ENCODE measurements at regions of chr5 and their contacts with region 1.

Region 1: GRCh38 chr5:170225326-170226128 is 7.3 kb upstream of the C5orf58 start:
- DNase-seq: peak; percentile 65 to 73 (median 69)
- H3K4me3 ChIP-seq: no peak overlapping the region
- H3K4me3 Mint-ChIP-seq: peak overlapping the region in 1 of 8 donors; percentile 14
- H3K27ac ChIP-seq: no peak overlapping the region
- H3K27ac Mint-ChIP-seq: peak overlapping the region in 3 of 7 donors; percentile 29 to 71 (median 70)
- H3K4me1 ChIP-seq: no peaks in the 10 kb centered on the region
- H3K4me1 Mint-ChIP-seq: peaks cover 3 to 4% (median 3%) of the 10 kb centered on the region in 4 donors
- H3K27me3 ChIP-seq: no peaks in the 10 kb centered on the region
- H3K27me3 Mint-ChIP-seq: no peaks in the 10 kb centered on the region

Region 2: GRCh38 chr5:170235876-170236864 is 10.6 kb after region 1 on chr5:
- CTCF ChIA-PET with region 1: interaction called, 15 read pairs
- POLR2A ChIA-PET with region 1: interaction called, 9 read pairs
- intact Hi-C with region 1: no loop called
- DNase-seq: no peak
- H3K4me3 ChIP-seq: no peak overlapping the region
- H3K4me3 Mint-ChIP-seq: peak overlapping the region in 1 of 8 donors; percentile 13
- H3K27ac ChIP-seq: no peak overlapping the region
- H3K27ac Mint-ChIP-seq: peak overlapping the region in 4 of 7 donors; percentile 25 to 77 (median 51)
- H3K4me1 ChIP-seq: no peaks in the 10 kb centered on the region
- H3K4me1 Mint-ChIP-seq: peaks cover 0 to 7% (median 4%) of the 10 kb centered on the region in 4 donors
- H3K27me3 ChIP-seq: no peaks in the 10 kb centered on the region
- H3K27me3 Mint-ChIP-seq: no peaks in the 10 kb centered on the region

Region 3: DNA sequence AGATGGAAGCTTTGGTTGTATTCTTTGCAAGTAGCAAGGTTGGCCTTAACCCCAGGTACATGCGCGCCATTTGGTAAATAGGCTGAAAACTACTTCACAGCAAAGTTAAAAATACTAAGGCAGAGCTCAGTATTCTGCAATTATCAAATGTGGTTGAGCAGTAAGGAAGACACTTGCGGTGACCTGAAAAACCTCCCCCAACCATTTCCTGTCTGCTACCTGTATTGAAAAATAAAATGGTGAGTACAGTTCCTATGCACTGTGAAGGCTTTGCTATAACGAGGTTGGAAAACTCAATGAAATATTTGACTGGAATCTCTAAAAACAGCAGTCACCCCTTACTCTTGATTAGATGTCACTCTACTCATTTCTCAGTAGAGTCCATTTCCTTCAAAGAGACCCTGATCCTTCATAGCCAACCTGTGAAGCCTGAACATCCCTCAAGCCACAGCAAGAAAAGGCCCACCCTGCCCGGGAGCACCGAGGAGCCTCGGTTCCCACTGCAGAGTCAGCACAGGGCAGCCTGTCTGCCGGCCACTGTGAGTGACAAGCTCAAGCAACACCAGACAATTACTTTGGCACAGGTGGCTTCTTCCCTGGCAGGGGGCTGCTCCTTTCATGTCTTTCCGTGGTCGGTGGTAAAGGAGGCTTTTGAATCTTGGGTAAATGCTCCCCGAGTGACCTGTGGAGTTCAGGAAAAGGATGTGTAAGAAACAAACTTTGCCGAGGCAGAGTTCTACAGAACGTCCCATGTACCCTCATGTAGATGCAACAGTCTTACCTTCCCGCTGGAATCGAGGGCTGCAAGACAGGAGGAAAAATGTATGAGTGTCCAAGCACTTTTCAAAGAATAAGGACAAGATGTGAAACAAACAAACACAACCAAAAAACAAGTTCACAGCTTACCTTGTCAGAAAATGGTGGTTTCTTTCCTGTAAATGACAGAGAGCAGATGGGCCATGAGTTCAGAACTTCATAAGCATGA is 36.8 kb after region 1 on chr5:
- CTCF ChIA-PET with region 1: interaction called, 85 read pairs
- POLR2A ChIA-PET with region 1: interaction called, 11 read pairs
- intact Hi-C with region 1: no loop called
- DNase-seq: peak; percentile 77 to 85 (median 80)
- H3K4me3 ChIP-seq: peak overlapping the region; percentile 4 to 28
- H3K4me3 Mint-ChIP-seq: peak overlapping the region; percentile 59 to 82 (median 72)
- H3K27ac ChIP-seq: peak overlapping the region; percentile 67
- H3K27ac Mint-ChIP-seq: peak overlapping the region; percentile 82 to 98 (median 95)
- H3K4me1 ChIP-seq: peaks cover 80% of the 10 kb centered on the region
- H3K4me1 Mint-ChIP-seq: peaks cover 51 to 89% (median 74%) of the 10 kb centered on the region in 4 donors
- H3K27me3 ChIP-seq: no peaks in the 10 kb centered on the region
- H3K27me3 Mint-ChIP-seq: no peaks in the 10 kb centered on the region

Region 4: GRCh38 chr5:170278611-170279452 is 53.3 kb after region 1 on chr5:
- CTCF ChIA-PET with region 1: interaction called, 43 read pairs
- POLR2A ChIA-PET with region 1: interaction called, 7 read pairs
- intact Hi-C with region 1: loop called (anchors 1 kb)
- DNase-seq: peak; percentile 90 to 96 (median 91)
- H3K4me3 ChIP-seq: peak overlapping the region in 1 of 2 donors; percentile 15
- H3K4me3 Mint-ChIP-seq: peak overlapping the region; percentile 75 to 92 (median 85)
- H3K27ac ChIP-seq: peak overlapping the region; percentile 68
- H3K27ac Mint-ChIP-seq: peak overlapping the region; percentile 91 to 100 (median 96)
- H3K4me1 ChIP-seq: peaks cover 95% of the 10 kb centered on the region
- H3K4me1 Mint-ChIP-seq: peaks cover 83 to 100% (median 93%) of the 10 kb centered on the region in 4 donors
- H3K27me3 ChIP-seq: no peaks in the 10 kb centered on the region
- H3K27me3 Mint-ChIP-seq: no peaks in the 10 kb centered on the region

Region 5: GRCh38 chr5:170333161-170333910 is 107.8 kb after region 1 on chr5:
- CTCF ChIA-PET with region 1: interaction called, 374 read pairs
- POLR2A ChIA-PET with region 1: interaction called, 35 read pairs
- intact Hi-C with region 1: no loop called
- DNase-seq: peak; percentile 55 to 88 (median 61)
- H3K4me3 ChIP-seq: peak overlapping the region in 1 of 2 donors; percentile 39
- H3K4me3 Mint-ChIP-seq: peak overlapping the region in 6 of 8 donors; percentile 71 to 90 (median 84)
- H3K27ac ChIP-seq: peak overlapping the region; percentile 94
- H3K27ac Mint-ChIP-seq: no peak overlapping the region
- H3K4me1 ChIP-seq: peaks cover 99% of the 10 kb centered on the region
- H3K4me1 Mint-ChIP-seq: peaks cover 0 to 59% (median 30%) of the 10 kb centered on the region in 4 donors
- H3K27me3 ChIP-seq: no peaks in the 10 kb centered on the region
- H3K27me3 Mint-ChIP-seq: peaks cover 0 to 2% of the 10 kb centered on the region in 2 donors

Region 6: DNA sequence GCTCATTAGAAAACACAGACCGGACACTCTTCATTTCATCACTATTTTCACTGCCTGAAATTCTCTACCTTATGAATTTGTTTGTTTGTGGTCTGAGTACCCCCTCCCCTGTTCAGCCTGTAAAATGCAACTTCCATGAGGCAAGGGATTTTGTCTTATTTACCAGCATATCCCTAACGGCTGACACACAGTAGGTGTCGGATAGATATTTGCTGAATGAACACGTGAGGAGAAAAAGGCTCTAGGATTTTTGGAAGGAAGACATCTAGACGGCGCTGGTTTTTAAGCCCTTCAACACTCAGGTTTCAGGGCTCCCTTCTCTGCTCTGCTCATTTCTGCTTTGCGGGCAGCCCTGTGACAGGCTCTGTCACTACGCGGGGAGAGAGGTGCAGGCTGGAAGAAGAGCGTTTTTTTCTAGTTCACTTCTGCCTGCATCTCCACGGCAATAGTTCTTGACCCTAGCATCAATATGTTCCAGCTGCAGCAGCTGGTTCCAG is 122.7 kb after region 1 on chr5:
- CTCF ChIA-PET with region 1: interaction called, 374 read pairs
- POLR2A ChIA-PET with region 1: no interaction called
- intact Hi-C with region 1: no loop called
- DNase-seq: no peak
- H3K4me3 ChIP-seq: no peak overlapping the region
- H3K4me3 Mint-ChIP-seq: no peak overlapping the region
- H3K27ac ChIP-seq: no peak overlapping the region
- H3K27ac Mint-ChIP-seq: peak overlapping the region in 1 of 7 donors; percentile 39
- H3K4me1 ChIP-seq: no peaks in the 10 kb centered on the region
- H3K4me1 Mint-ChIP-seq: peaks cover 0 to 1% (median 0%) of the 10 kb centered on the region in 4 donors
- H3K27me3 ChIP-seq: no peaks in the 10 kb centered on the region
- H3K27me3 Mint-ChIP-seq: peaks cover 12 to 17% of the 10 kb centered on the region in 2 donors

Region 7: DNA sequence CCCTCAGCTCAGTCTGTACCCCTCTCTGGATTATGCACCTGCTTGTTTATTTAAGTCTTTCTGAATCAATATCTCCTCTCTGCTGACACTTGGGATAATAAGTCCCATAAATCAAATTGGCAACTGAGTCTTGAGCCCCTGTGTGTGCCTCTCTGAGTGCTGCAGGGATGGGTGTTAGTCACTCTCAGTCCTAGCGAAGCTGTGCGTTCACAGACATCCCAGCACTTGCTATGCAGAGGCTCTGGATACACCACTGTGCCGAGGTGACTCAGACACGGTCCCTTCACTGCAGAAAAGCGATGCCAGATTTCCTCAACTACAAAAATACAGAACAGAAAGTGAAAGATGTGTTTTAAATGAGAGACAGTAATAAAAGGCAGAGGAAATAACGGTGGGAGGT is 167.7 kb after region 1 on chr5:
- CTCF ChIA-PET with region 1: no interaction called
- POLR2A ChIA-PET with region 1: no interaction called
- intact Hi-C with region 1: no loop called
- DNase-seq: peak in 1 of 5 donors; percentile 8
- H3K4me3 ChIP-seq: no peak overlapping the region
- H3K4me3 Mint-ChIP-seq: peak overlapping the region; percentile 21 to 84 (median 64)
- H3K27ac ChIP-seq: no peak overlapping the region
- H3K27ac Mint-ChIP-seq: peak overlapping the region; percentile 19 to 81 (median 66)
- H3K4me1 ChIP-seq: peaks cover 13% of the 10 kb centered on the region
- H3K4me1 Mint-ChIP-seq: peaks cover 13 to 15% (median 14%) of the 10 kb centered on the region in 4 donors
- H3K27me3 ChIP-seq: no peaks in the 10 kb centered on the region
- H3K27me3 Mint-ChIP-seq: peaks cover 0 to 7% of the 10 kb centered on the region in 2 donors

Region 8: GRCh38 chr5:170633235-170634081 is 407.9 kb after region 1 on chr5:
- CTCF ChIA-PET with region 1: interaction called, 4 read pairs
- POLR2A ChIA-PET with region 1: no interaction called
- intact Hi-C with region 1: loop called (anchors 2 kb)
- DNase-seq: peak in 1 of 5 donors; percentile 38
- H3K4me3 ChIP-seq: peak overlapping the region in 1 of 2 donors; percentile 43
- H3K4me3 Mint-ChIP-seq: peak overlapping the region; percentile 72 to 93 (median 85)
- H3K27ac ChIP-seq: no peak overlapping the region
- H3K27ac Mint-ChIP-seq: peak overlapping the region in 6 of 7 donors; percentile 25 to 82 (median 76)
- H3K4me1 ChIP-seq: peaks cover 19% of the 10 kb centered on the region
- H3K4me1 Mint-ChIP-seq: peaks cover 15 to 37% (median 22%) of the 10 kb centered on the region in 4 donors
- H3K27me3 ChIP-seq: no peaks in the 10 kb centered on the region
- H3K27me3 Mint-ChIP-seq: peaks cover 5 to 7% of the 10 kb centered on the region in 2 donors

Measured in CD4-positive, alpha-beta memory T cell (primary cell).